Activated CD4-positive, alpha-beta T cell treated with anti-CD3 and anti-CD28 coated beads for 36 hours (primary cell): ENCODE measurements at regions of chr2 and their contacts with region 1.

Region 1: GRCh38 chr2:235746257-235747084 is 252.6 kb downstream of the AGAP1 start:
- DNase-seq: peak; percentile 59
- ATAC-seq: peak; percentile 87
- H3K4me3 Mint-ChIP-seq: no peak overlapping the region
- H3K27ac Mint-ChIP-seq: no peak overlapping the region
- H3K4me1 Mint-ChIP-seq: no peaks in the 10 kb centered on the region
- H3K27me3 Mint-ChIP-seq: peaks cover 9% of the 10 kb centered on the region

Region 2: GRCh38 chr2:235135990-235136561 is 610.4 kb before region 1 on chr2:
- CTCF ChIA-PET with region 1: interaction called, 3 read pairs
- POLR2A ChIA-PET with region 1: no interaction called
- intact Hi-C with region 1: loop called (anchors 1 kb)
- DNase-seq: peak; percentile 75
- ATAC-seq: no peak
- H3K4me3 Mint-ChIP-seq: no peak overlapping the region
- H3K27ac Mint-ChIP-seq: no peak overlapping the region
- H3K4me1 Mint-ChIP-seq: peaks cover 2% of the 10 kb centered on the region
- H3K27me3 Mint-ChIP-seq: peaks cover 18% of the 10 kb centered on the region

Region 3: DNA sequence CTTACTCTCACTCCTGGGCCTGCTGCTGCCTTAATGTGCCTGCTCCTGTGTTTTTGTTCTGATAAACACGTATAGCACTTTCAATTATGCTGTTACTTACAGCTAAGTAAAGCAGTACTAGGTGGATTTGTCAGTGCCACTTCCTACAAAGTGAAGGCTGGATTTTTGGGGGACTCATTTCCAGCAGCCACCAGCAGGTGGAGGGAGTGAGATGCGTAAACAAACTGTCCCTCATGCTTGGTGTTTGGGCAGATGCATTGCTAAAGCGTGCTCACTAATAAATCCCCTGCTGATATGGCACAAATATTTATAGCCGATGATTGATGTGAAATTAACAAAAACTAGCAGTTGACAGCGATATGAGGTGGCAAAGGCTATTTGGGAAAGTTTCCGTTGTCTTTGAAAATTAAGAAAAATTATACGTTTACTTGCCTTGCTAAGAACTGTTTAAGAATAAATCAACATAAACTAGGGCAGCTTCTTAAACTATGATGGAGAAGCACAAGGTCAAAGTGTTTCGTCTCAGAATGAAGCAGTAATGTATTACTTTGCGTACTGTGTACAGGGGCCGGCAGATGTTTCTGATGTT is 151.0 kb before region 1 on chr2:
- CTCF ChIA-PET with region 1: interaction called, 23 read pairs
- POLR2A ChIA-PET with region 1: no interaction called
- intact Hi-C with region 1: loop called (anchors 1 kb)
- DNase-seq: peak; percentile 61
- ATAC-seq: no peak
- H3K4me3 Mint-ChIP-seq: no peak overlapping the region
- H3K27ac Mint-ChIP-seq: no peak overlapping the region
- H3K4me1 Mint-ChIP-seq: no peaks in the 10 kb centered on the region
- H3K27me3 Mint-ChIP-seq: peaks cover 4% of the 10 kb centered on the region

Region 4: GRCh38 chr2:236517251-236518031 is 771.0 kb after region 1 on chr2:
- CTCF ChIA-PET with region 1: no interaction called
- POLR2A ChIA-PET with region 1: no interaction called
- intact Hi-C with region 1: no loop called
- DNase-seq: no peak
- ATAC-seq: no peak
- H3K4me3 Mint-ChIP-seq: no peak overlapping the region
- H3K27ac Mint-ChIP-seq: no peak overlapping the region
- H3K4me1 Mint-ChIP-seq: no peaks in the 10 kb centered on the region
- H3K27me3 Mint-ChIP-seq: peaks cover 3% of the 10 kb centered on the region